ENCODE measurements at regions of chr17 and their contacts with region 1.

Region 1: DNA sequence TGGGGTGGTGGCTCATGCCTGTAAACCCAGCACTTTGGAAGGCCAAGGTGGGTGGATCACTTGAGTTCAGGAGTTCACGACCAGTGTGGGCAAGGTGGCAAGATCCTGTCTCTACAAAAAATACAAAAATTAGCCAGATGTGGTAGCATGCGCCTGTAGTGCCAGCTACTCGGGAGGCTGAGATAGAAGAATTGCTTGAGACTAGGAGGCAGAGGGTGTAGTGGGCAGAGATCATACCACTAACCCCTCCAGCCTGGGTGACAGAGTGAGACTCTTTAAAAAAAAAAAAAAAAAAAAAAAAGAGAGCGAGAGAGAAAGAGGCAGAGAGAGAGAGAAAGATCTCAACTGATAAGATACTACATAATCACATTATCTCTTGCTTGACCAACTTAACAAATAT is 45.9 kb downstream of the KANSL1 start:
- DNase-seq: no peak
- ATAC-seq: no peak
- H3K4me3 ChIP-seq: no peak overlapping the region
- H3K27ac ChIP-seq: no peak overlapping the region
- H3K4me1 ChIP-seq: peaks cover 38% of the 10 kb centered on the region
- H3K27me3 ChIP-seq: no peaks in the 10 kb centered on the region
- CTCF ChIP-seq: no peak
- EP300 ChIP-seq: no peak
- POLR2A ChIP-seq: no peak
- RAD21 ChIP-seq: no peak

Region 2: GRCh38 chr17:46097497-46097896 is 49.8 kb before region 1 on chr17:
- CTCF ChIA-PET with region 1: no interaction called
- POLR2A ChIA-PET with region 1: no interaction called
- in situ Hi-C with region 1: no loop called
- intact Hi-C with region 1: loop called (anchors 5 kb)
- DNase-seq: no peak
- ATAC-seq: no peak
- H3K4me3 ChIP-seq: no peak overlapping the region
- H3K27ac ChIP-seq: no peak overlapping the region
- H3K4me1 ChIP-seq: peaks cover 30% of the 10 kb centered on the region
- H3K27me3 ChIP-seq: no peaks in the 10 kb centered on the region
- CTCF ChIP-seq: no peak
- EP300 ChIP-seq: no peak
- POLR2A ChIP-seq: no peak
- RAD21 ChIP-seq: no peak

Region 3: GRCh38 chr17:46125831-46126230 is 21.5 kb before region 1 on chr17:
- CTCF ChIA-PET with region 1: no interaction called
- POLR2A ChIA-PET with region 1: no interaction called
- in situ Hi-C with region 1: no loop called
- intact Hi-C with region 1: no loop called
- DNase-seq: no peak
- ATAC-seq: no peak
- H3K4me3 ChIP-seq: no peak overlapping the region
- H3K27ac ChIP-seq: no peak overlapping the region
- H3K4me1 ChIP-seq: peaks cover 21% of the 10 kb centered on the region
- H3K27me3 ChIP-seq: no peaks in the 10 kb centered on the region
- CTCF ChIP-seq: no peak
- EP300 ChIP-seq: no peak
- POLR2A ChIP-seq: no peak
- RAD21 ChIP-seq: no peak